Activated naive CD4-positive, alpha-beta T cell treated with anti-CD3 and anti-CD28 coated beads for 36 hours (primary cell): ENCODE measurements at regions of chr22 and their contacts with region 1.

Region 1: GRCh38 chr22:36301384-36301828 is 48.5 kb downstream of the APOL1 start:
- DNase-seq: peak; percentile 89
- H3K4me3 Mint-ChIP-seq: no peak overlapping the region
- H3K27ac Mint-ChIP-seq: peak overlapping the region; percentile 72
- H3K4me1 Mint-ChIP-seq: peaks cover 4% of the 10 kb centered on the region
- H3K27me3 Mint-ChIP-seq: no peaks in the 10 kb centered on the region

Region 2: DNA sequence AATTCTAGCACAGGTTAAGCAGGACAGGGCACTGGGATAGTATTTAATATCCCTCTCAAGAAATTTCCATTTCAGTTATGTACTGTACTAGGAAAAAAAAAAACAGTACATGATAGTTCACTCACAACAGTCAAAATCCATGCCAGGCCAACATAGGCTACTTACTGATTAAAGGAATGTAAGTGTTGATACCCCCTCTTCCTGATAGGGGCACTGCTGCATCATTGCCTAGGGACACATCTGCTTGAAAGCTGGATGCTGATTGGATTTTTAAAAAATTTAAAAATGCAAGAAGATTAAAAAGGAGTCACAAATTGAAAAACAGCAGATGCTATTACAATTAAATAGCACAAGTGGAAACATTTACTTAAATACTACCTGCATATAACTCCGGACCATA is 540.4 kb before region 1 on chr22:
- CTCF ChIA-PET with region 1: no interaction called
- intact Hi-C with region 1: no loop called
- DNase-seq: peak; percentile 8
- H3K4me3 Mint-ChIP-seq: no peak overlapping the region
- H3K27ac Mint-ChIP-seq: no peak overlapping the region
- H3K4me1 Mint-ChIP-seq: no peaks in the 10 kb centered on the region
- H3K27me3 Mint-ChIP-seq: no peaks in the 10 kb centered on the region

Region 3: DNA sequence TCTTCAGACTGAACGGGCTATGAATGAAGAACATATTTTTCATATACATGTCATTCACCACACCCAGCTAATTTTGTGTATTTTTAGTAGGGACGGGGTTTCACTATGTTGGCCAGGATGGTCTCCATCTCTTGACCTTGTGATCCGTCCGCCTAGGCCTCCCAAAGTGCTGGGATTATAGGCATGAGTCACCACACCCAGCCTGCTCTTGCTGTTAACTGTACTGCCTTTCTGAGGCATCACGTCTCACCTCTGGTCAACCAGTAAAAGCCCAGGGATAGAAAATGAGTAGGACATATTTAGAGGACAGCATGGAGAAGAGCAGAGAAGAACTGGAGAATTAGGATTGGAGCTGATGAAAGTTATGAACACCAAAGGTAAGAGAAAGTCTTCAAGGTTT is 196.4 kb before region 1 on chr22:
- CTCF ChIA-PET with region 1: no interaction called
- intact Hi-C with region 1: no loop called
- DNase-seq: no peak
- H3K4me3 Mint-ChIP-seq: no peak overlapping the region
- H3K27ac Mint-ChIP-seq: no peak overlapping the region
- H3K4me1 Mint-ChIP-seq: no peaks in the 10 kb centered on the region
- H3K27me3 Mint-ChIP-seq: no peaks in the 10 kb centered on the region

Region 4: GRCh38 chr22:36277482-36278291 is 23.7 kb before region 1 on chr22:
- CTCF ChIA-PET with region 1: interaction called, 13 read pairs
- intact Hi-C with region 1: no loop called
- DNase-seq: peak; percentile 81
- H3K4me3 Mint-ChIP-seq: no peak overlapping the region
- H3K27ac Mint-ChIP-seq: peak overlapping the region; percentile 58
- H3K4me1 Mint-ChIP-seq: peaks cover 23% of the 10 kb centered on the region
- H3K27me3 Mint-ChIP-seq: no peaks in the 10 kb centered on the region

Region 5: GRCh38 chr22:36286471-36287224 is 14.8 kb before region 1 on chr22:
- CTCF ChIA-PET with region 1: interaction called, 17 read pairs
- intact Hi-C with region 1: no loop called
- DNase-seq: peak; percentile 74
- H3K4me3 Mint-ChIP-seq: no peak overlapping the region
- H3K27ac Mint-ChIP-seq: peak overlapping the region; percentile 56
- H3K4me1 Mint-ChIP-seq: peaks cover 7% of the 10 kb centered on the region
- H3K27me3 Mint-ChIP-seq: no peaks in the 10 kb centered on the region

Region 6: DNA sequence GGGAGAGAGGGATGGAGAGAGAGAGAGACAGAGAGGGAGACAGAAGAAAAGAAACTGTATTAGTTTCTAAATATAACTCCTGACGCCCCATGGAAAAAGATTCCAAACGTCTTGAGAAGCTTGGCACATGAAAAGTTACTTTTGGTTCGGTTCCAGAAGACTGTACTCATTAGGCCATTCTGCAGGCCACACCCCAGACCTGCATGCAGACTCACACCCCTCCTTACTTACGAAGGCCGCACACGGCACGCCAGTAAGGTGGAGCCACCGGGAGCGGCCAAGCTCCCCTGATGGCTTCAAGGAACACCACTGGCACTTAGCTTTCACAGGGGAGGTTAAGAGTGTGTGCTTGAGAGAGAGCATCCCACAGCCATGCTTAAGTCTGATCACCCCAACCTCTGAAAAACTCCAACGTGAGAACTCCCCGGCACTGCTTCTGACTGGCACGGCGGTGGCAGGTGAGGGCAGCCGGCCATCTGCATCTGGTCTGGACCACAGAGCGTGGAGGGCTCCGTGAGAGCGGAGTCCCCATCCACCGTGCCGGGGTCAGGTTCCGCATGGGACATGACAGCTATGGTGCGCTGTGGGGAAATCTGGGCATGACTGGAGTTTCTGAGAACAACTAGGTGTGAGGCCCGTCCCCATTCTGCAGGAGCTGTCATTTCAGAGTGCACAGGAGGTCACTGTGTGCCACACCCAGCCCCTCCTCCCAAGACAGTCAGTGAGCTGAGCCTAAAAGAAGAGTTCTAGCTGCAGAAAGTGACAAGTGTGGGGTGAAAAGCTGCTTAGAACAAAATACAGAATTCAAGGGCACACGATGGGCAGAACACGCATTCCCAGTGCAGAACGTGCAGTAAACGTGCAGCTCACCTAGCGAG is 24.0 kb after region 1 on chr22:
- CTCF ChIA-PET with region 1: interaction called, 11 read pairs
- intact Hi-C with region 1: loop called (anchors 1 kb)
- DNase-seq: no peak
- H3K4me3 Mint-ChIP-seq: no peak overlapping the region
- H3K27ac Mint-ChIP-seq: peak overlapping the region; percentile 100
- H3K4me1 Mint-ChIP-seq: peaks cover 36% of the 10 kb centered on the region
- H3K27me3 Mint-ChIP-seq: no peaks in the 10 kb centered on the region

Region 7: DNA sequence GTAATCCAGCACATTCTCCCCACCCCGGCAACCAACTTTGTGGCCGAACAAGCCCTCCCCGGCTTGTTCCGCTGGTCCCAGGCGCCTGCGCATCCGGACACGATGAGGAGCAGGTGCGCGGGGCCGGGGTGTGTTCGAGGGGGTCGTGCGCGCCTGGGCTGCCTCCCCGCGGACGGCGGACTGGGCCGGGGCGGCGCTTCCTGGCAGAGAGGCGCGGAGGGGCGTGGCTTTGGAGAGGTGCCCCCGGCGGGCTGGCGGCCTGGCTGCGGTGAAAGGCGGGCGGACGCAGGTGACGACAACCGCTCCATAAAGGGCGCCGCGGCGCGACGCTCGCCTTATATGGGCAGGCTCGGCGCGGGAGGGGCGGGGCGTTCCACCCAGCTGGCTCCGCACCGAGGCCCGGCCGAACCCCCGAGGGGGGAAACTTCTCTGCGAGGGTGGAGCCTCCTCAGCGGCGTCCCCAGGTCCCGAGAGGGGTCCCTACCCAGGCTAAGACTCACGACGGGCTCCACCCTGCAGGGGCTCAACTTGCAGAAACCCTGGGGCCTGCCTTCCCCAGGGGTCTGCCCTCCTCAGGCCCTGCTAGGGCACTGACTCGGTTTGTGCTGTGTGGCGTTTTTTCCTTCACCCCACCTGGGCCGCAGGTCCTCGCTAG is 153.6 kb after region 1 on chr22:
- CTCF ChIA-PET with region 1: interaction called, 7 read pairs
- intact Hi-C with region 1: loop called (anchors 1 kb)
- DNase-seq: peak; percentile 96
- H3K4me3 Mint-ChIP-seq: peak overlapping the region; percentile 76
- H3K27ac Mint-ChIP-seq: peak overlapping the region; percentile 75
- H3K4me1 Mint-ChIP-seq: peaks cover 37% of the 10 kb centered on the region
- H3K27me3 Mint-ChIP-seq: no peaks in the 10 kb centered on the region

Region 8: DNA sequence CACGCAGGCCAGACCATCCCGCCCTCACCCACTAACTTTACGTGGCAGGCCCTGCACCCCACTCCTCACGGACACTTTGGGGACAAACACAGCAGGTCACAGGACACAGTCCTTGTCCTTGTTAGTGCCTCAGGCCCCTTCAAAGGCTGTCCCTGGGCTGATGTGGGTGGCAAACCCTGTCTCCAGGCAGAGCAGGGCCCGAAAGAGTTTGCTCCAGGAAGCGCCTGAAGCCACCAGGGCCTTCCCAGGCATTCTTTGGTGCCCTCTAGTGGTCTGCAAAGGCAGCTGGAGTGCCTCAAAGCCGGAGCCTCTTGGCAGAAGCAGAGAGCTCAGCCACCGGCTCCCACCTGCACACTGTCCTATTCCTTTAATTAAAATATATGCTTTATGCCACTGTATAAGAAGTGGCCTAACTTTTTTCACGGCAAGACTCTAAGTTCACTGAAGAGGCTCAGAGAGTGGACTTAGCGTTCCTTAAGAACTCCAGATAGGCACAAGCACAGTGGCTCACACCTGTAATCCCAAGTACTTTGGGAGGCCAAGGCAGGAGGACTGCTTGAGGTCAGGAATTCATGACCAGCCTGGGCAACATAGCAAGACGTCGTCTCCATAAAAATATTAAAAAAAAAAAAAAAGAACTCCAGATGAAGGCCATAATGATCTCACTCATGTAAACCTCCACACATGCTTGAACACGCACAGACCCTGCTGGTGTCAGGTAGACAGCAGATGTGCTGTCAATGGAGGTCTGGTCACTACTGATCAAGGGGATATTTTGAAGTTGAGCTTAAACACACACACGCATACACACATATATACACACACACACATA is 169.0 kb after region 1 on chr22:
- CTCF ChIA-PET with region 1: interaction called, 119 read pairs
- intact Hi-C with region 1: loop called (anchors 1 kb)
- DNase-seq: peak; percentile 90
- H3K4me3 Mint-ChIP-seq: no peak overlapping the region
- H3K27ac Mint-ChIP-seq: peak overlapping the region; percentile 46
- H3K4me1 Mint-ChIP-seq: peaks cover 30% of the 10 kb centered on the region
- H3K27me3 Mint-ChIP-seq: no peaks in the 10 kb centered on the region

Region 9: DNA sequence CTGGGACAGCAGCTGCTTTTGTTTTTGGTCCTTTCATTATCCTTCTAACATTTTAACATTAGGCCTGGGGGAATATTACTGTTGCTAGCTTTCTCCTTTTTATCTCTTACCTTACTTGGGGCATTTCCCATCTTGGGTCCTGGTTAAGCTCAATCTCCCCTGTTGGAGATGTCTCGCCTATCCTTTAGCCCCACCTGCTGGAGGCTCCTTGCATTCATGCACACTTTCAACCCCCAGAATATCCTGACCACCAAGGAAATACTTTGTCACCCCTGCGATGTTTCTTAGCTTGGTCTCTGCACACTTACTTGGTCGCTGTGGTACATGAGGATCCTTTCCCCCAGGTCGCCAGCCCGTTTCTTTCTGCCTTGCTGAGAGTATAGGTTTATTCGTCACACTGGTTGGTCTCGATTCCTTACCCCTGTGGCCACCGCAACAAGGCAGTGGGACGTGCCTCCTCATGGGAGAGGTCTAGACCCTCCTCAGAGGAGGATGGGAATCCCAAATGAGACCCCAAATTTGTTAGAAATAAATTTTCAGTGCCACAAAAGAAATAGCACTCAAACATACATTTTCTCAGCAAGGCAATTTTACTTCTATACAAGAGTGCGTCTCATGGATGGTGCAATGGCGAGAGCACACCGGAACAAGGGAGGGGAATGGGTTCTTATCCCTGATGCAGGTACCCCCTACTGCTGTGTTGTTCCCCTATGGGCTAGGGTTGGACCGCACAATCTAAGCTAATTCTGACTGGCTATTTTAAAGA is 185.4 kb after region 1 on chr22:
- CTCF ChIA-PET with region 1: interaction called, 16 read pairs
- intact Hi-C with region 1: no loop called
- DNase-seq: peak; percentile 70
- H3K4me3 Mint-ChIP-seq: no peak overlapping the region
- H3K27ac Mint-ChIP-seq: no peak overlapping the region
- H3K4me1 Mint-ChIP-seq: peaks cover 3% of the 10 kb centered on the region
- H3K27me3 Mint-ChIP-seq: no peaks in the 10 kb centered on the region